GM10248 (cell line): ENCODE measurements at regions of chr17 and their contacts with region 1.

Region 1: DNA sequence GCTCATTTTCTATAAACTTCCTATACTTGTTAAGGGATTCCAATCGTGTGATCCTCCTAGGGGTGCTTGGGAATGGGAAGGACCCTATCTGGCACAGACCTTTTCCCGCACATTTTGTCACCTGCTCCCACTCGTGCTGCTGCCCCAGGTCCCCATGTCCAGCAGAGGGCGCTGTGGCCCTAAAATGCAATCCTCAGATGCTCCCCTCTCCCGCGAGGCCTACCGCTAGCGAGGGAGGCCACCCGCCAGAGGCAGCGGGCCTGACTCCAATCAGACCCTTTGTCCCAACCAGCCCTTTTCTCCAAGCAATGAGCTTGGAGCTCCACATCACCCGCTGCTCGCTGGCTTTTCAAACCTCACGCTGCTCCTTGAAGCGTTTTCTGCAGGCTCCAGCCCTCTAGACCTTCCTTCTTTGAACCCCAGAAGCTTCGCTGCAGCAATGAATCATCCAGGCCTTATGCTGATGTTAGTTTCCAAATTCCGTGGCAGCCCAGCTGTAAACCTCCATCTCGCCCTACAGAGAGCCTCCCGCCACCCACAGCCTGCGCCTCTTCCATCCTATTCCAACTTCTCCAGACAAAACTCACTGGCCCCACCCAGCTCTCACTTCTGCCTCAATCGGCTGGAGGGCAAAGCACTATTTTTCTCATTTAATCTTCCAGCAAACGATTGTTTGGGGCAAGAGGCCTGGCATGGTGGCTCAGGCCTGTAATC is 23.6 kb upstream of the FZD2 start:
- DNase-seq: peak; percentile 91
- CTCF ChIP-seq: peak; percentile 96

Region 2: GRCh38 chr17:44385287-44386181 is 148.2 kb before region 1 on chr17:
- CTCF ChIA-PET with region 1: interaction called, 3 read pairs
- POLR2A ChIA-PET with region 1: interaction called, 10 read pairs
- DNase-seq: peak; percentile 93
- CTCF ChIP-seq: peak; percentile 4

Region 3: DNA sequence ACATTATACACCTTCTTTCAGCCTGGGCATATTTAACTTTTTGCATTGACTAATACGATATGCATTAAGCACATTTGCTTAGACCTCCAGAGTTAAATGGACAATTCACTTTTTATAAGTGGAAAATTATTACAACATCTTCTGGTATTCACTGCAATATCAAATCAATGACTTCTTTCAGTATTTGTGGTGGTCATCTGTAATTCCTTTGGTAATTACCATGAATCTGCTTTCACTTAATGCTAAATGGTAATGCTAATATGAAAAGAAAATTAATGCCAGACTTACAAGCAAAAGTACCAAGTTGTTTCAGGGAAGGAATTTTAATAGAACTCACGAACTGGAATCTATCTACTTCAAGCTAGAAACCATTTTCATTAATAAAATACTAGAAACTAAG is 36.9 kb before region 1 on chr17:
- CTCF ChIA-PET with region 1: no interaction called
- POLR2A ChIA-PET with region 1: no interaction called
- DNase-seq: no peak
- CTCF ChIP-seq: no peak

Region 4: GRCh38 chr17:44555099-44555498 is 21.4 kb after region 1 on chr17:
- CTCF ChIA-PET with region 1: interaction called, 14 read pairs
- POLR2A ChIA-PET with region 1: no interaction called
- DNase-seq: no peak
- CTCF ChIP-seq: no peak

Region 5: GRCh38 chr17:44568945-44569858 is 35.5 kb after region 1 on chr17:
- CTCF ChIA-PET with region 1: interaction called, 11 read pairs
- POLR2A ChIA-PET with region 1: no interaction called
- DNase-seq: no peak
- CTCF ChIP-seq: no peak

Region 6: DNA sequence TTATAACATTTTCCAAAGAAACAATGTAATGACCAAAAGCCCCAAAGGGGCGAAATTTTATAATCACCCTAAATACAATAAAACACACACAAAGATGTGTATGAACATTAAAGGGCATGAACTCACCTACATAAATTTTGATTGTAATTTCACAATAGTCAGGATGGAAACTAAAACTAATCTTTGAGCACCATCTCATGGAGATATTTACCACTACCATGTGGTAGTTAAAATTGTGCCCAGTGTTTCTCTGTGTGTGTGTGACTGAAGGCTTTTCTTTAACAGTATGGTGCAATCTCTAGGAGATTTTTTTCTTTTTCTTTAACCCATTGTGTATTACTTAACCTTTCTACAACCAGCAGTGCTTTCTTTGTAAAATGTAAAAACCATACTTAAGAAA is 102.9 kb after region 1 on chr17:
- CTCF ChIA-PET with region 1: interaction called, 14 read pairs
- POLR2A ChIA-PET with region 1: no interaction called
- DNase-seq: no peak
- CTCF ChIP-seq: peak; percentile 14

Region 7: GRCh38 chr17:44672479-44673093 is 138.9 kb after region 1 on chr17:
- CTCF ChIA-PET with region 1: interaction called, 46 read pairs
- POLR2A ChIA-PET with region 1: no interaction called
- DNase-seq: peak; percentile 18
- CTCF ChIP-seq: peak; percentile 46